Heart left ventricle (tissue), 16 donors: ENCODE measurements at regions of chr4 and their contacts with region 1.

Region 1: GRCh38 chr4:67087897-67088296 is 457.4 kb downstream of the CENPC start:
- DNase-seq: peak in 1 of 5 donors; percentile 19
- ATAC-seq: no peak
- H3K4me3 ChIP-seq: no peak overlapping the region
- H3K27ac ChIP-seq: no peak overlapping the region
- H3K4me1 ChIP-seq: no peaks in the 10 kb centered on the region
- H3K27me3 ChIP-seq: no peaks in the 10 kb centered on the region
- CTCF ChIP-seq: peak; percentile 8 to 54 (median 31)
- POLR2A ChIP-seq: no peak

Region 2: GRCh38 chr4:67198727-67199126 is 110.8 kb after region 1 on chr4:
- intact Hi-C with region 1: loop called in 1 of 10 experiments (anchors 10 kb)
- DNase-seq: no peak
- ATAC-seq: peak in 1 of 4 donors; percentile 71
- H3K4me3 ChIP-seq: no peak overlapping the region
- H3K27ac ChIP-seq: no peak overlapping the region
- H3K4me1 ChIP-seq: no peaks in the 10 kb centered on the region
- H3K27me3 ChIP-seq: no peaks in the 10 kb centered on the region
- CTCF ChIP-seq: peak in 5 of 12 donors; percentile 6 to 35 (median 24)
- POLR2A ChIP-seq: no peak

Region 3: DNA sequence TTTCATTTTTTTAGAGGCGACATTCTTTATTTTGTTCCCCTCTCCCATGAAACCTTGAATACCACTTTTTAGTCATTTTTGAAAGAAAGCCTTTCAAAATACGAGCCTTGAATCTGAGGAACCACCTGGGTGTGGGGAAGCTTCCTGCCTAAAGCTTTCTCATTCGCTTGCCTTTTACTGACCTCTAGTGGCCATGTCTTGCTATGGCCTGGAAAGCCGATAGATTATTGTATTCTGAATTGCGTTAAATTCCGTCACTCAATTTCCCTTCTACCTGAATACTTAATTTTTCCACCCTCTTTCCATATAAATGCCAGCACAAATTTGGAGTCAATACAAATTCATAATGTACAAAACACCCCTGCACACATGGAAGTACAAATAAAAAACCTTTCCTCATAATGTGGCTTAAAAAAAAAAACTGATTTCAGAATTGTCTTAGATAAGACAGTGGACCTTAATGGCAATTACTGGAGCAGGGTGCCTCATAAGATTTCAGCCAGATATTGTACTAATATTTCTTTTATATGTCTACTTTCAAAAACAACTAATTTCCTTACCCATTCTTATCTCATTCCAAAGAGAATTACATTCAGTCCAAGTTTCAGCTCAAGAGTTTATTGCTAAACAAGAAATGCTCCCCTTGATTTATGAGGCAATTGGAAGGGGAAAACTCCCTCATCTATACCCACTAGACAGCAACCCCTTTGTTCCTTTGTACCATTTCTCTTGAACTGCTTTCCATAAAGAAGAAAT is 239.5 kb after region 1 on chr4:
- intact Hi-C with region 1: loop called in 3 of 10 experiments (anchors 5 kb)
- DNase-seq: peak in 4 of 5 donors; percentile 20 to 33 (median 26)
- ATAC-seq: peak in 3 of 4 donors; percentile 56 to 67 (median 66)
- H3K4me3 ChIP-seq: no peak overlapping the region
- H3K27ac ChIP-seq: no peak overlapping the region
- H3K4me1 ChIP-seq: no peaks in the 10 kb centered on the region
- H3K27me3 ChIP-seq: peaks cover 0 to 16% (median 0%) of the 10 kb centered on the region in 9 donors
- CTCF ChIP-seq: peak; percentile 68 to 92 (median 84)
- POLR2A ChIP-seq: no peak